ENCODE measurements at regions of chr15 and their contacts with region 1.

Region 1: GRCh38 chr15:79943820-79944219 is 27.2 kb downstream of the BCL2A1 start:
- DNase-seq: no peak
- ATAC-seq: peak; percentile 84
- H3K4me3 ChIP-seq: no peak overlapping the region
- H3K27ac ChIP-seq: no peak overlapping the region
- H3K4me1 ChIP-seq: peaks cover 16% of the 10 kb centered on the region
- H3K27me3 ChIP-seq: no peaks in the 10 kb centered on the region
- CTCF ChIP-seq: no peak
- EP300 ChIP-seq: peak; percentile 72 to 89
- POLR2A ChIP-seq: no peak
- RAD21 ChIP-seq: no peak

Region 2: GRCh38 chr15:79572691-79573404 is 371.0 kb before region 1 on chr15:
- CTCF ChIA-PET with region 1: no interaction called
- POLR2A ChIA-PET with region 1: no interaction called
- RAD21 ChIA-PET with region 1: no interaction called
- SMC1A ChIA-PET with region 1: no interaction called
- in situ Hi-C with region 1: no loop called
- intact Hi-C with region 1: no loop called
- DNase-seq: no peak
- ATAC-seq: no peak
- H3K4me3 ChIP-seq: no peak overlapping the region
- H3K27ac ChIP-seq: no peak overlapping the region
- H3K4me1 ChIP-seq: no peaks in the 10 kb centered on the region
- H3K27me3 ChIP-seq: no peaks in the 10 kb centered on the region; a peak in 2 of 4 replicates
- CTCF ChIP-seq: no peak
- EP300 ChIP-seq: no peak
- POLR2A ChIP-seq: no peak
- RAD21 ChIP-seq: no peak

Region 3: GRCh38 chr15:79834495-79834894 is 109.3 kb before region 1 on chr15:
- CTCF ChIA-PET with region 1: no interaction called
- POLR2A ChIA-PET with region 1: no interaction called
- RAD21 ChIA-PET with region 1: no interaction called
- SMC1A ChIA-PET with region 1: no interaction called
- in situ Hi-C with region 1: no loop called
- intact Hi-C with region 1: no loop called
- DNase-seq: no peak
- ATAC-seq: no peak
- H3K4me3 ChIP-seq: no peak overlapping the region
- H3K27ac ChIP-seq: no peak overlapping the region
- H3K4me1 ChIP-seq: peaks cover 8% of the 10 kb centered on the region
- H3K27me3 ChIP-seq: no peaks in the 10 kb centered on the region
- CTCF ChIP-seq: no peak
- EP300 ChIP-seq: no peak
- POLR2A ChIP-seq: no peak
- RAD21 ChIP-seq: no peak

Region 4: DNA sequence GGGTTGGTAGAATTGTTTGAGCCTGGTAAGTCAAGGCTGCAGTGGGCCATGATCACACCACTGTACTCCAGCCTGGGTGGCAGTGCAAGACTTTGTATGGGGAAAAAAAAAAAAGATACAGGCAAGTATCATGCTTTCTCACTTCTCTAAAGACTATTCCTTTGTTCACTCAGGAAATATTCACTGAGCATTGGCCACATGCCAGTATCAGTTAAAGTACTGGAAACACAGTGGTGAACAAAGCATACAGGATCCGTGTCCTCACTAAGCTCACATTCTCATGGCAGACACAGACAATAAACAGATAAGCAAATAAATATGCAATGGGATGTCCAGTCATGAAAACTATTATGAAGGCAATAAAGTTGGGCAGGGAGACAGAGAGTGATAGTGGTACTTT is 41.9 kb before region 1 on chr15:
- CTCF ChIA-PET with region 1: interaction called, 5 read pairs
- POLR2A ChIA-PET with region 1: interaction called, 4 read pairs
- RAD21 ChIA-PET with region 1: interaction called, 9 read pairs
- SMC1A ChIA-PET with region 1: interaction called, 10 read pairs
- in situ Hi-C with region 1: no loop called
- intact Hi-C with region 1: no loop called
- DNase-seq: peak; percentile 90
- ATAC-seq: peak; percentile 42
- H3K4me3 ChIP-seq: no peak overlapping the region
- H3K27ac ChIP-seq: peak overlapping the region; percentile 36
- H3K4me1 ChIP-seq: peaks cover 33% of the 10 kb centered on the region
- H3K27me3 ChIP-seq: no peaks in the 10 kb centered on the region
- CTCF ChIP-seq: peak in 1 of 3 experiments; percentile 9; a peak in 1 of 6 replicates
- EP300 ChIP-seq: no peak
- POLR2A ChIP-seq: no peak
- RAD21 ChIP-seq: no peak

Region 5: GRCh38 chr15:79956354-79956939 is 12.6 kb after region 1 on chr15:
- CTCF ChIA-PET with region 1: interaction called, 8 read pairs
- POLR2A ChIA-PET with region 1: interaction called, 14 read pairs
- RAD21 ChIA-PET with region 1: interaction called, 48 read pairs
- SMC1A ChIA-PET with region 1: interaction called, 85 read pairs
- in situ Hi-C with region 1: no loop called
- intact Hi-C with region 1: no loop called
- DNase-seq: no peak
- ATAC-seq: peak; percentile 9; the same call in 2 of the 3 replicates
- H3K4me3 ChIP-seq: no peak overlapping the region
- H3K27ac ChIP-seq: no peak overlapping the region
- H3K4me1 ChIP-seq: peaks cover 6% of the 10 kb centered on the region; the same call in 1 of the 2 replicates
- H3K27me3 ChIP-seq: no peaks in the 10 kb centered on the region
- CTCF ChIP-seq: no peak
- EP300 ChIP-seq: no peak
- POLR2A ChIP-seq: no peak
- RAD21 ChIP-seq: no peak

Region 6: GRCh38 chr15:79962178-79962577 is 18.4 kb after region 1 on chr15:
- CTCF ChIA-PET with region 1: interaction called, 8 read pairs
- POLR2A ChIA-PET with region 1: interaction called, 18 read pairs
- RAD21 ChIA-PET with region 1: interaction called, 48 read pairs
- SMC1A ChIA-PET with region 1: interaction called, 115 read pairs
- in situ Hi-C with region 1: no loop called
- intact Hi-C with region 1: no loop called
- DNase-seq: no peak
- ATAC-seq: peak; percentile 53
- H3K4me3 ChIP-seq: peak overlapping the region; percentile 28
- H3K27ac ChIP-seq: peak overlapping the region; percentile 72
- H3K4me1 ChIP-seq: peaks cover 2% of the 10 kb centered on the region; the same call in 1 of the 2 replicates
- H3K27me3 ChIP-seq: no peaks in the 10 kb centered on the region
- CTCF ChIP-seq: no peak
- EP300 ChIP-seq: no peak
- POLR2A ChIP-seq: peak; percentile 37; the same call in 1 of the 2 replicates
- RAD21 ChIP-seq: no peak

Measured in GM12878 (cell line).